Heart left ventricle (tissue), 16 donors: ENCODE measurements at regions of chr2 and their contacts with region 1.

Region 1: DNA sequence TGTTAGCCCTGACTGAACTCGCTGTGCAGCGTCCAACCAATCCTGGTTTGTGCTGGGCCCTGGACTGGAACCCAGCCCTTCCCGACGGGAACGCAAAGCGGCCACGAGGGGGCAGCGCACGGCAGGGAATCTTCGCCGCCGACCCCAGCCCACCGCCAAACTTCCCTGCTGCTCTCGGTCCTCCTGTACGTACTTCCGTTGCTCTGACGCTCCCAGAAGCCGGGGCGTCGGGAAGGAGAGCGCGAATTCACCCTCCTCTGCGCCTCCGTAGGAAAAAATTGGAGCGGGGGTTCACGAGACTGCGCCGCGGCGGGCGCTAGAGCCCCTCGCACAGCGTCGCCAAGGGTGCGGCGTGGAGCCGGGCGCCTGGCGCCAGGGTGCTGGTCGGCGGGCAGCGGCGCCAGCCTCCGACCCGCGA is 948 bp upstream of the SH3RF3 start:
- DNase-seq: peak; percentile 80 to 90 (median 86)
- ATAC-seq: peak; percentile 75 to 91 (median 89)
- H3K4me3 ChIP-seq: peak overlapping the region; percentile 64 to 80 (median 73)
- H3K27ac ChIP-seq: peak overlapping the region; percentile 55 to 86 (median 78)
- H3K4me1 ChIP-seq: peaks cover 0 to 35% (median 18%) of the 10 kb centered on the region in 12 donors
- H3K27me3 ChIP-seq: peaks cover 0 to 15% (median 0%) of the 10 kb centered on the region in 9 donors
- CTCF ChIP-seq: peak; percentile 82 to 97 (median 94)
- POLR2A ChIP-seq: no peak

Region 2: GRCh38 chr2:109185821-109186570 is 57.9 kb after region 1 on chr2:
- intact Hi-C with region 1: loop called in 1 of 10 experiments (anchors 10 kb)
- DNase-seq: peak; percentile 55 to 76 (median 64)
- ATAC-seq: peak; percentile 74 to 94 (median 86)
- H3K4me3 ChIP-seq: no peak overlapping the region
- H3K27ac ChIP-seq: peak overlapping the region; percentile 30 to 93 (median 78)
- H3K4me1 ChIP-seq: peaks cover 0 to 31% (median 22%) of the 10 kb centered on the region in 12 donors
- H3K27me3 ChIP-seq: no peaks in the 10 kb centered on the region
- CTCF ChIP-seq: no peak
- POLR2A ChIP-seq: no peak

Region 3: GRCh38 chr2:109209412-109209811 is 81.4 kb after region 1 on chr2:
- intact Hi-C with region 1: loop called in 3 of 10 experiments (anchors 5 to 10 kb)
- DNase-seq: no peak
- ATAC-seq: peak in 3 of 4 donors; percentile 62 to 74 (median 74)
- H3K4me3 ChIP-seq: no peak overlapping the region
- H3K27ac ChIP-seq: peak overlapping the region in 2 of 12 donors; percentile 19 to 31
- H3K4me1 ChIP-seq: peaks cover 0 to 60% (median 31%) of the 10 kb centered on the region in 12 donors
- H3K27me3 ChIP-seq: no peaks in the 10 kb centered on the region
- CTCF ChIP-seq: no peak
- POLR2A ChIP-seq: no peak

Region 4: GRCh38 chr2:109284826-109285225 is 156.8 kb after region 1 on chr2:
- intact Hi-C with region 1: loop called in 2 of 10 experiments (anchors 5 to 10 kb)
- DNase-seq: peak; percentile 53 to 78 (median 72)
- ATAC-seq: peak; percentile 70 to 90 (median 80)
- H3K4me3 ChIP-seq: no peak overlapping the region
- H3K27ac ChIP-seq: peak overlapping the region in 3 of 12 donors; percentile 6 to 48 (median 24)
- H3K4me1 ChIP-seq: peaks cover 7 to 52% (median 31%) of the 10 kb centered on the region in 12 donors
- H3K27me3 ChIP-seq: no peaks in the 10 kb centered on the region
- CTCF ChIP-seq: no peak
- POLR2A ChIP-seq: no peak

Region 5: DNA sequence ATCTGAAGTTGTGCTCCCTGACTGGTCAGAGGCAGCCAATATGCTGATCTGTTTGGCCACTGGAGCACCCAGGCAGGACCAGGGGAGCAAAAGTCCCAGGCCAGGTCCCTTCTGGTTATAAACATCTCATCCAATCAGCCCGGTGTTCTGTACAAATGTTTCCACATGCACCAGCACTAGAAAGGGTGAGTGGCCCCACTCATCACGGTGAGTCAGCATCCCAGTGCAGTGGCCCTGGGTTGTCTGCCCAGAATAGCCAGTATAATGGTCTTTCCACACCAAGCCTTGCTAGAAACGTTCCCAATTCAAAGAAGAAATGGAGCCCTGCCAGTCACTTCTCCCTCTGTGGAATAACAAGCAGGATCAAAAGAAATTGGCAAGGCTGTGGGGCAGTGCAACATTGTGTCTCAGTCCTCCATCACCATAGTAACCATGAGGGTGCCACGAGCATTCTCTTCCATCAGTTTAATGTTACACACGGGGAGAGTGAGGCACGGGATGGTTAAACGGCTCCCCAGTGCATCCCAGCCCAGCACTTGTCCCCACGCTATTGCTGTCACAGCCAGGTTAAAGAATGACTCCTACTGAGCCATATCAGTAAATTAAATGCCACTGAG is 310.8 kb after region 1 on chr2:
- intact Hi-C with region 1: loop called in 1 of 10 experiments (anchors 5 kb)
- DNase-seq: peak in 4 of 5 donors; percentile 25 to 82 (median 60)
- ATAC-seq: peak; percentile 64 to 87 (median 80)
- H3K4me3 ChIP-seq: no peak overlapping the region
- H3K27ac ChIP-seq: peak overlapping the region in 10 of 12 donors; percentile 17 to 79 (median 42)
- H3K4me1 ChIP-seq: peaks cover 5 to 42% (median 27%) of the 10 kb centered on the region in 12 donors
- H3K27me3 ChIP-seq: no peaks in the 10 kb centered on the region
- CTCF ChIP-seq: no peak
- POLR2A ChIP-seq: no peak

Region 6: DNA sequence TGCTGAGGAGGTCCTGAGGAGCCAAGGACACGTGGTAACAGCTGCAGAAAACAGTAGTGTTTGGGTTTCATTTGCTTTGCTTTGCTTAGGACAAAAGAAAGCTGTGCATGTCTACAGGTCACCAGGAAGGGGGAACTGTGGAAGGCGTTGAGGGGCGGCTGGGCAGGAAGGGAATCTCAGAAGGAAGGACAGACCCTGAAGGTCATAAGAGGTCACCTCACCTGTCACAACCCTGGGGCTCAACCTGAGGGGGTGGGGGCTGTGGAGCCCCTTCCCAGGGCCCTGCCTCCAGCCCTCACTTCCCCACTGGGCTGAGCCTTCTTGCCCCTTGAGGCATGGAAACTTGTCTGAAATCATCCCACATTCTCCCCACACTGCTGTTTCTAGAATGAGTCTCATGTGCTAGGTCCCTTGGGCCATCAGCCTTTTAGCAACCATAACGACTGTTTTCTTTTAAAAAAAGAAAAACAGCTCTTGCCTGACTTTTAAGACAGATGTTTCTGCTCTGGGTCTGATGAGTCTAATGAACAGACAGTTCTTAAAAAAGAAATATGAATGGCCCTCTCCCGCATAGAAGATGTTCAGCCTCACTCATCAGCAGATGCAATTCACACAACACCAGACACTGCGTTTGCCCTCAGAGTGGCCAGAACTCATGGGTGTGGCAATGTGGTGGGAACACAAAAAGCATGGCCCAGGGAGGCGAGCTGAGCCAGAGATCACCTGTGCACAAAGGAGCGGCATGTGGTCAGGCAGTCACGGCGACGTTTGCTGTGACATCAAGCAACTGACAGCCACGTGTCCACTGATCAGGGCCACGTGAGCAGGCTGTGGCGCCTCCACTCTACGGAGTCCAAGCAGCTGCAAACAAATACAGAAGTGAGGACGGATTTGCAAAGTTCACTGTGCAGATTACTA is 401.7 kb after region 1 on chr2:
- intact Hi-C with region 1: no loop called
- DNase-seq: peak in 3 of 5 donors; percentile 27 to 53 (median 29)
- ATAC-seq: peak; percentile 26 to 53 (median 38)
- H3K4me3 ChIP-seq: no peak overlapping the region
- H3K27ac ChIP-seq: peak overlapping the region in 5 of 12 donors; percentile 13 to 67 (median 31)
- H3K4me1 ChIP-seq: peaks cover 0 to 17% (median 4%) of the 10 kb centered on the region in 12 donors
- H3K27me3 ChIP-seq: no peaks in the 10 kb centered on the region
- CTCF ChIP-seq: no peak
- POLR2A ChIP-seq: no peak

Region 7: DNA sequence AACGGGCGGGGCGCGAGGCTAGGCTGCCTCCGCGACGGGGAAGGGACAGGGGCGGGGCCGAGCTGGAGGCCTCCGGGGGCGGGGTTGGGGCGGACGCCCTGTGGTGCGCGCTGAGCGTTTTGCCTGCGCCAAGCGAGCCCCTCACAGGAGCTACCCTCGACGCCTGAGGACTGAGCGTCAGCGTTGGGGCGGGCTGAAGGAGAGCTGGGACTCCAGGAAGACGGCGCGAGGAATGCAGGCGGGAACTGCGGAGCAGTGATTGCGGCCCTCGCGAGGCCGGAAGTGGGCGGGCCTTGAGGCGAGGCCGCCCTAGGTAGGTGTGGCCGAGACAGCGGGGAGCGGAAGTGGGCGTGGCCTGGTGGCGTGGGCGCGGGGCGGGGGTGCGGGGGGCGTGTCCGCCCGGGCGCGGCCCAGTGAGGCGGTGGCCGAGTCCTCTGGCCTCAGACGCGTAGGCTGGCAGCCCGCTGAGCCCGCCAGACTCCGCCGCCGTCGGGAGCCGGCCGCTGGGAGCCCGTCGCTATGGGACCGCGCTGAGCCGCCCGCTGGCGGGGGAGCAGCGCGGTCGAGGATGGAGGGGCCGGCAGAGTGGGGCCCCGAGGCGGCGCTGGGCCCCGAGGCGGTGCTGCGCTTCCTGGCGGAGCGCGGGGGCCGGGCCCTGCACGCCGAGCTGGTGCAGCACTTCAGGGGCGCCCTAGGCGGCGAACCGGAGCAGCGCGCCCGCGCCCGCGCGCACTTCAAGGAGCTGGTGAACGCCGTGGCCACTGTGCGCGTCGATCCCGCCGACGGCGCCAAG is 486.1 kb after region 1 on chr2 and contains the starts of genes SEPTIN10 and SOWAHC:
- intact Hi-C with region 1: loop called in 1 of 10 experiments (anchors 5 kb)
- DNase-seq: peak; percentile 96 to 98 (median 97)
- ATAC-seq: peak; percentile 96 to 98 (median 97)
- H3K4me3 ChIP-seq: peak within 1 kb of the TSS; percentile 57 to 91 (median 74)
- H3K27ac ChIP-seq: peak within 1 kb of the TSS; percentile 89 to 100 (median 99)
- H3K4me1 ChIP-seq: peaks cover 0 to 55% (median 30%) of the 10 kb centered on the region in 12 donors
- H3K27me3 ChIP-seq: peaks cover 0 to 16% (median 0%) of the 10 kb centered on the region in 9 donors
- CTCF ChIP-seq: no peak
- POLR2A ChIP-seq: peak in 1 of 2 donors; percentile 95
- total RNA-seq, gene SEPTIN10: 35.4 to 84.6 (median 50.0) TPM
- total RNA-seq, gene SOWAHC: 1.3 to 4.2 (median 2.3) TPM